ENCODE measurements at regions of chr2 and their contacts with region 1.

Region 1: GRCh38 chr2:26785431-26786206 is at the start of gene CENPA:
- DNase-seq: peak; percentile 97 to 98
- ATAC-seq: peak; percentile 100
- H3K4me3 ChIP-seq: peak within 1 kb of the TSS; percentile 59 to 90 (median 70)
- H3K27ac ChIP-seq: peak within 1 kb of the TSS; percentile 6 to 47 (median 38)
- H3K4me1 ChIP-seq: peaks cover 7 to 13% of the 10 kb centered on the region in 2 donors
- H3K27me3 ChIP-seq: peaks cover 0 to 10% (median 0%) of the 10 kb centered on the region in 3 donors
- CTCF ChIP-seq: peak in 3 of 5 experiments; percentile 40 to 56 (median 45)
- POLR2A ChIP-seq: peak; percentile 7 to 27
- total RNA-seq, gene CENPA: 0.22 TPM in 1 of 4 donors, not detected in the others

Region 2: DNA sequence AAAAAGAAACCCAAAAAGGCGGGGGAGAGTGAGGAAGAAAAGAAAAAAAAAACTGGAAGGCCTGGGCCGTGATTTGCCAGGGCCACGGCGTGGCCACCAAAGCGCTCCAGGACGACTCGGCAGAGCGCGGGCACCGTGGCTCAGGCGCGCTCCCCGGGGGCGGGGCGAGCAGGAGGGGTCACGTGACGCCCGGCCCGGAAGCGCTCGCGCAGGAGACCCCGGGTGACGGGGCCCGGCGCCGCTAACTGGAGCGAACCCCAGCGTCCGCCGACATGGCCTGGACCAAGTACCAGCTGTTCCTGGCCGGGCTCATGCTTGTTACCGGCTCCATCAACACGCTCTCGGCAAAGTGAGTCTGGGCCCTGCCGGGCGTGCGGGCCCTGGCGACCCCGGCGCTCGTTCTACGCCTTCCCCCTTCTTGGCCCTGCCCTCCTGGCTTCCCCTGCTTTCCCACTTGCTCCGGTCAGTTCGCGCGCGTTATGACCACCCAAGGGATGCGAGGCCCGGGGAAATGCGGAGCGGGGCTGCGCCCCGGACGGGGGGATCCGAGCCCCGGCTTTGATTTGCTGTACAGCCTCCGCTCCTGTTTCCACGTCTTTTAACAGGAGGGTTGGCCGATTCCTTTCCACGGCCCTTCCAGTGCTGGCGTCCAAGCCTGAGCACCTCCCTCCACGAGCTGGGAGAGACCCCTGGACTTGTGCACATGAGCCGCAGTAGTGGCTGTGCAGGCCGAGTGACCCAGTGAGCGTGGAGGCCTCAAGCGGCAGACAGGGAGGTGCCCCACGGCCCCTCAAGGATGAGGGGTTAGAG is 21.3 kb before region 1 on chr2 and contains the start of gene SLC35F6:
- in situ Hi-C with region 1: no loop called
- intact Hi-C with region 1: loop called (anchors 2 kb)
- DNase-seq: peak; percentile 71 to 77
- ATAC-seq: peak; percentile 83 to 93
- H3K4me3 ChIP-seq: peak within 1 kb of the TSS; percentile 56 to 100 (median 90)
- H3K27ac ChIP-seq: peak within 1 kb of the TSS; percentile 93 to 99 (median 98)
- H3K4me1 ChIP-seq: peaks cover 16 to 38% of the 10 kb centered on the region in 2 donors
- H3K27me3 ChIP-seq: no peaks in the 10 kb centered on the region
- CTCF ChIP-seq: peak in 1 of 5 experiments; percentile 39
- POLR2A ChIP-seq: peak; percentile 96 to 98
- total RNA-seq, gene SLC35F6: 37.8 to 54.5 (median 45.9) TPM

Region 3: GRCh38 chr2:26770986-26771602 is 14.5 kb before region 1 on chr2:
- in situ Hi-C with region 1: no loop called
- intact Hi-C with region 1: loop called (anchors 1 kb)
- DNase-seq: peak; percentile 87 to 90
- ATAC-seq: peak; percentile 37 to 41
- H3K4me3 ChIP-seq: peak overlapping the region in 3 of 4 donors; percentile 0 to 36 (median 26)
- H3K27ac ChIP-seq: peak overlapping the region; percentile 93 to 99 (median 96)
- H3K4me1 ChIP-seq: peaks cover 55 to 66% of the 10 kb centered on the region in 2 donors
- H3K27me3 ChIP-seq: no peaks in the 10 kb centered on the region
- CTCF ChIP-seq: peak in 4 of 5 experiments; percentile 19 to 52 (median 44)
- POLR2A ChIP-seq: no peak

Region 4: DNA sequence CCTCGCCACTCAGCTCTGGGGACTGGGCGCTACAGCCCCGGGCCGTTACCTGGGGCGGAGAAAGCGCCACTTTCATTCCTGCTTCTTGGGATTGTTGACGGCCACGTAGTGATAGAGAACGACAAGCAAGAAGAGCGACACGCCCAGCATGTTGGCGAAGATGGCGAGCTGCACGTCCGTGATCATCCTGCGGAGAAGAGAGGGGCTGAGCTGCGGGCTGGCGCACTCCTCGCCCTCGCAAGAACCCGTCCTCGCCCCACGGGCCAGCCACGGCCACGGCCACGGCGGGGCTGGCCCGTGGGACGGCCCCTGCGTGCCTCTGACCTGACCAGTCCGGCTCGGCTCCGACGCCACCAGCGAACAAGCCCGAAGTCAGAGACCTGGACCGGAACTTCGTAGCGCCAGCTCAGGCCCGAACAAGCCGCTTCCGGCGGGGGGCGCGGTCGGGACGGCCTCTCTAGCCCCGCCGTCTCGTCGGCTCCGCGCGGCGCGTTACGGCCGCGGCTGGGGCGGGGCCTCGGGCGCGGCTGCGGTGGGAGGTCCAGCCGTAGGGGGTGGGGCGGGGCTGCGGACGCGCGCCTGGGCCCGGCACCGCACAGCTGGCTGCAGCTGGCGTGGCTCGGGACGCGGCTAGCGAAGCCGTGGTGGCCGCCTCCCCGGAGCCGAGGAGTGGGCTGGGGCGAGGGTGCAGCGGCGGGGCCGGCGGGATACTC is 285.8 kb after region 1 on chr2 and contains the start of gene OST4:
- in situ Hi-C with region 1: no loop called
- intact Hi-C with region 1: loop called (anchors 5 kb)
- DNase-seq: peak; percentile 90 to 91
- ATAC-seq: peak; percentile 95
- H3K4me3 ChIP-seq: peak within 1 kb of the TSS; percentile 83 to 98 (median 89)
- H3K27ac ChIP-seq: peak within 1 kb of the TSS; percentile 91 to 97 (median 92)
- H3K4me1 ChIP-seq: peaks cover 29 to 31% of the 10 kb centered on the region in 2 donors
- H3K27me3 ChIP-seq: no peaks in the 10 kb centered on the region
- CTCF ChIP-seq: no peak
- POLR2A ChIP-seq: peak; percentile 79 to 88
- total RNA-seq, gene OST4: 191 to 283 (median 251) TPM